Activated T-helper 2 cell treated with anti-CD3 and anti-CD28 coated beads, Interferon-gamma antibody, Interleukin-2, Interleukin-4, amounts not matched to agents 10 μg/mL and 5 μg/mL and 100 μg/mL, durations not matched to agents 14 hours and 24 hours and 36 hours (primary cell): ENCODE measurements at regions of chr2 and their contacts with region 1.

Region 1: GRCh38 chr2:37877457-37878315 is 47.4 kb upstream of the RMDN2 start:
- DNase-seq: no peak
- H3K4me3 Mint-ChIP-seq: no peak overlapping the region
- H3K27ac Mint-ChIP-seq: no peak overlapping the region
- H3K4me1 Mint-ChIP-seq: peaks cover 11% of the 10 kb centered on the region
- H3K27me3 Mint-ChIP-seq: peaks cover 23% of the 10 kb centered on the region

Region 2: GRCh38 chr2:37168217-37168981 is 709.3 kb before region 1 on chr2:
- intact Hi-C with region 1: loop called (anchors 5 kb)
- DNase-seq: no peak
- H3K4me3 Mint-ChIP-seq: no peak overlapping the region
- H3K27ac Mint-ChIP-seq: no peak overlapping the region
- H3K4me1 Mint-ChIP-seq: peaks cover 1% of the 10 kb centered on the region
- H3K27me3 Mint-ChIP-seq: peaks cover 2% of the 10 kb centered on the region

Region 3: GRCh38 chr2:37414470-37414949 is 463.2 kb before region 1 on chr2:
- intact Hi-C with region 1: loop called (anchors 5 kb)
- DNase-seq: no peak
- H3K4me3 Mint-ChIP-seq: no peak overlapping the region
- H3K27ac Mint-ChIP-seq: no peak overlapping the region
- H3K4me1 Mint-ChIP-seq: no peaks in the 10 kb centered on the region
- H3K27me3 Mint-ChIP-seq: peaks cover 22% of the 10 kb centered on the region

Region 4: DNA sequence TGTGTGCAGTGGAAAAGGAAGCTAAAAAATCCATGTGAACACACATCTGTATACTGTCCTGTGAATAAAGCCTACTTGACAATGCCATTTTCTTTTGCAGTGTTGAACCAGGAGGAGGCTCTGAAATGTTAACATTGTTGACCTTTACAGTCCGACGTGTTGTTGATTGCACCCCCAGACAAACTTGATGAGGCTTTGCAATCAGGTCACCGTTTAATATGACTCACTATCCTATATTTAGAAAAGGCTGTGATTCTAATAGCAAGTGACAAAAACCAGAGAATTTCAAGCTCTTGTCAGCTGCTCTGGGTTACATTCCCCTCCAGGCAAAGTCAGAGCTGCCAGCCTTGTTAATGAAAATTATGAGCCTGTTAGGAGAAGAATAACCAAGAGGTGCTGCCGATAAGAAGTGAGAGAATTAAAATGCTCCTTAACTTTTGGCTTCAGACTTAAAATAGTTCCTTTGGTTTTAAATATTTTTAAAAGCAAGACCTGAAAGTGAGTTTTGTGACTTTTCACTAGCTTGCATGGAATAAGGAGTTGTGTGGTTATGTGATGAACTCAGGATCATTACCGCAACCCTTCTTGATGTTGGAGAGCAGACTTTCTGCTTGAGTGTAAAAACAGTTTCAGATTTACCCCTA is 371.2 kb before region 1 on chr2:
- intact Hi-C with region 1: no loop called
- DNase-seq: no peak
- H3K4me3 Mint-ChIP-seq: no peak overlapping the region
- H3K27ac Mint-ChIP-seq: no peak overlapping the region
- H3K4me1 Mint-ChIP-seq: no peaks in the 10 kb centered on the region
- H3K27me3 Mint-ChIP-seq: peaks cover 28% of the 10 kb centered on the region

Region 5: GRCh38 chr2:37549598-37549997 is 328.1 kb before region 1 on chr2:
- intact Hi-C with region 1: loop called (anchors 10 kb)
- DNase-seq: no peak
- H3K4me3 Mint-ChIP-seq: no peak overlapping the region
- H3K27ac Mint-ChIP-seq: no peak overlapping the region
- H3K4me1 Mint-ChIP-seq: peaks cover 12% of the 10 kb centered on the region
- H3K27me3 Mint-ChIP-seq: peaks cover 11% of the 10 kb centered on the region

Region 6: DNA sequence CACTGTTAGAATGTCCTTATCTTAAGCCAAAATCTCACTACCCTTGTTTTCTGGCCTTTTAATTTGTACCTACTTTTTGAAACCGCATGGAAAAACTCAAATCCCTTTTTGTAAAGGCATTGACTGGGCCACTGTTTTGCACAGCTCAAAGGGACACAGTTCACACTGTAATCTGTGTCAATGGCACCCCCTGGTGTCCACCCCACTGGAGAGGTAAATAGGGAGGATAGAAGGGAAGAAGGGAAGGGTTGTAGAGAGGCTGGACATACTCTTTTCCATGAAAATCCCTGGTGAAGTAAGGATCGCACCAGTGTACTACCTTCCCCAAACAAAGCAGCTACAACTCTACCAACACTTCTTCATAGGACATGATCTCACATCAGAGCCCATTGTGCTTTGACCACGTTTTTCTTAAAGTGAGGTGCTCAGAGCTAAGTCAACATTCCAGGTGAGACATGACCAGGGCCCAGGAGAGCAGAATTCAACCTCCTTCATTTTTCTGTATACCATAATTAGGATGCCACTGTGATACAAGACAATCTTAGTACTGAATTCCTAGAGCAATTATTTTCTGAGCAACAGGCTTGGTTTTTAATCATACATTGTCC is 45.0 kb before region 1 on chr2:
- intact Hi-C with region 1: loop called (anchors 1 kb)
- DNase-seq: peak; percentile 55
- H3K4me3 Mint-ChIP-seq: no peak overlapping the region
- H3K27ac Mint-ChIP-seq: no peak overlapping the region
- H3K4me1 Mint-ChIP-seq: peaks cover 21% of the 10 kb centered on the region
- H3K27me3 Mint-ChIP-seq: peaks cover 1% of the 10 kb centered on the region